Aorta (tissue), 5 donors: ENCODE measurements at regions of chr9 and their contacts with region 1.

Region 1: DNA sequence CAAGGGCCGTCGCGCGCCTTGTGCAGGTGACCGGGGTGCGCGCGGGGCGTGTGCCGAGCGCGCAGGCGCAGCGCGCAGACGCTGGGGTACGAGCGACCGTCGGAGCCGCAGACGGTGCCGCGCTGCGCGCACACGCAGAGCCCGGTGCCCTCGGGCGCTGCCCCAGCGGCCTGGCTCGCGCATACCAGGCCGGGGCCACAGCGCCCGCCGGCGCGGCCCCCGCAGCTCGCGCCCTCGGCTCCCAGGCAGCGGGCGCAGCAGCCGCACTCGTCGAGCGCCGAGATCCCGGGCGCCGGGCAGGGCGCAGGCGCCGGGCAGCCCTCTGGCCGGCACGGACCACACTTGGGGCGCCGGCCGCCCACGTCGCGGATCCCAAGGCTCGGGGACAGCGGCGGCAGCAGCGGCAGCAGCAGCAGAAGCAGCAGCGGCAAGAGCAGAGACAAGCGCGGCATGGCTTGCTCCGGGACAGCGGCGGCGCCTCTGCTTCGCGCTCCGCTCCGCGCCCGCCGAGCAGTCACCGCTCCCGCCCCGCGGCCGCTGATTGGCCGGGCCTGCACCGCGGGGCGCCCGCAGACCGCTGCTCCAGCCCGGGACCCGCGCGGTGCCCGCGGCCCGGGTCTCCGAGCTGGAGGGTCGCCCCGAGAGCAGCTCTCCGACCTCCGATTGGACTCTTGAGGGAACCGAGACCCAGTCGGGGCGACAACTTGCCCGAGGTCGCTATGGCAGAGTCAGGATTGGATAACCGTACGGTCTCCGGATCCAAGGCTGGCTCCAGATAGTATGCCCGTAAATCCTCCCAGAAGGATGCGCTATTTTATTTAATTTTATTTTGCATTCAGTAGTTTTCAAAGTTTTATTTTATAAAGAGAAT is at the start of gene IGFBPL1:
- DNase-seq: no peak
- ATAC-seq: peak; percentile 60
- H3K4me3 ChIP-seq: peak within 1 kb of the TSS; percentile 72 to 75
- H3K27ac ChIP-seq: peak within 1 kb of the TSS in 1 of 2 donors; percentile 52
- H3K4me1 ChIP-seq: peaks cover 0 to 4% of the 10 kb centered on the region in 2 donors
- H3K27me3 ChIP-seq: no peaks in the 10 kb centered on the region
- total RNA-seq, gene IGFBPL1: 5.9 to 27.8 TPM

Region 2: DNA sequence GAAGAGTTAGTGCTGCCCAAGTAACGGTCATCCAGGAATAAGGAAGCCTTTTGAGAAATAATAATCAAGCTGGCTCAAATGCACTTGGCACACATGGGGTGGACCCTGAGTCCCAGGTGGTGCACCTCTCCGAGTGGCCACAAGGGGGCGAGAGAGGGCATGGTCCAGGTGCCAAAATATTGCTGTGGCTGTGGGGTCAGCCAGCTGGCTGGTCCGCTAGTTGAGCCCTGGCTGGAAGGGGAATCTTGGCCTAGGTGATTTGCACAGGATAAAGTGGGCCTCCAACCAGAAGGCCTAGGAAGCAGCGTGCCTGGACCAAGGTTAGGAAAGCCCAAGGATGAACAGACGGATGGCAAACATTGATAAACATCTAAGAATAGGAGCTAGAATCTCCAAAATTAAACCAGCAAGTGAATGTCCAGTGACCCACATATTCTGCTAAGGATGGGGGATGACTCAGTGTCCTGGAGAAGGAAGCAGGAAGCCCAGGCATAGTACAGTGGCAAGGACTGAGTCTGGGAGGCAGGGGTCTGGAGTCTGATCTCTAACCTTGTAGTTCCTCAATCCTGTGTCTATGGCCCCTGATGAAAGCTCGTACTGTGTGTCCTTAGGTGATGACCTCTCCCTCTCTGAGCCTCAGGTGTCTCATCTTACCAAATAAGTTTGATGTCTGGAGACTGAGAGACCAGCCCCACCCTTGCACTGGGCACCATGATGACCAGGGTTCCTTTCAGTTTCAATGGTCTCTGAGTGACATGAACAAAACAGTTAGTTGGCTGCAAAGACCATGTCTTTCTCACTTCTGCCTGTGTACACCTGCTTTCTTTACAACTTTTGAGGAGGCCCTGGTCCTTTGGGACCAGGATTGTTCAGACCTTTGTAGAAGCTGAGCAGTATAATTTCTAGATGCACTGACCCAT is 335.9 kb before region 1 on chr9:
- intact Hi-C with region 1: loop called in 1 of 2 experiments (anchors 10 kb)
- DNase-seq: peak; percentile 79 to 93
- ATAC-seq: peak; percentile 85
- H3K4me3 ChIP-seq: no peak overlapping the region
- H3K27ac ChIP-seq: no peak overlapping the region
- H3K4me1 ChIP-seq: no peaks in the 10 kb centered on the region
- H3K27me3 ChIP-seq: no peaks in the 10 kb centered on the region